Calu3 (cell line): ENCODE measurements at regions of chrX and their contacts with region 1.

Region 1: GRCh38 chrX:136529763-136530162 is 2.3 kb upstream of the VGLL1 start:
- DNase-seq: peak; percentile 9
- H3K4me3 Mint-ChIP-seq: no peak overlapping the region
- H3K27ac Mint-ChIP-seq: no peak overlapping the region
- H3K4me1 Mint-ChIP-seq: peaks cover 94% of the 10 kb centered on the region
- H3K27me3 Mint-ChIP-seq: no peaks in the 10 kb centered on the region
- CTCF ChIP-seq: no peak

Region 2: GRCh38 chrX:136147315-136147901 is 382.4 kb before region 1 on chrX and contains the start of gene FHL1:
- CTCF ChIA-PET with region 1: no interaction called
- intact Hi-C with region 1: no loop called
- DNase-seq: no peak
- H3K4me3 Mint-ChIP-seq: peak within 1 kb of the TSS; percentile 60
- H3K27ac Mint-ChIP-seq: no peak within 1 kb of the TSS
- H3K4me1 Mint-ChIP-seq: no peaks in the 10 kb centered on the region
- H3K27me3 Mint-ChIP-seq: peaks cover 39% of the 10 kb centered on the region
- CTCF ChIP-seq: no peak
- total RNA-seq, gene FHL1: 0.54 and 0.73 TPM in 2 replicates

Region 3: DNA sequence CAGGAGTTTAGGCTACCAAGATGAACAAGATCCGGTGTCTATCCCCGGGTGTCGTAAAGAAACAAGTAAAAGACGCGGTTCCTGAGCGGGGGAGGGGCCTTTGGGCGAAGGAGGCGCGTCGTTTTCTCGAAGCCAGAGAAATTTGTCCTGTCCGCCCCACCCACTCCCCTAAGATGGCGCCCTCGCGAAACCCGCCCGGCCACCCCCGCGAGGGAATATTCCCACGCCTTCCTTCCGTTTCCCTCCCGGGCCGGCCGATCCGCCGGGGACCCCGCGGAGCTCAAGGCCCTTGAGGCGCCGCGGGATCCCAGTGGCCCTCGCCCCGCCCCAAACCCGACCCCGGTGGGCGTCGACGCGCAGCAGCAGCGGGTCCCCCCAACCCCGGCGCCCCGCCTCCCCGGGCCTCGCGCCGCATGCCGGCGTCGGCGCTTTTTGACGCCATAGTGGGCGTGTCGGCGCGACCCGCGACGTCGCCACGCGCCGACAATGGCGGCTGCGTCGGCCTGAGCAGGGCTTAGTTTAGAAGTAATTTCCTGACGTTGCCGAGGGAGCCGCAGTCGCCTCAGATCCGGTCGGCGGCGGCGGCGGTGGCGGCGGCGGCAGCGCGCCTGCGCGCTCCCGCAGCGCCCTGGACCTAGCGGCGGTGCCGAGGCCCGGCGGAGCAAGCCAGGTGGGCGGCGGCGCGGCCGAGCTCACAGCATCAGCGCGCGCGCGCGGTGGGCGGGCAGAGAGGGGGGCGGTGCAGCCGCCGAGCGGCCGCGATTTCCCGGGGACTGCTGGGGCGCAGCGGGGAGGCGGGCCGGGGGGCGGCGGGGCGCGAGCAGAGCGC is 32.8 kb before region 1 on chrX and contains the start of gene HTATSF1:
- CTCF ChIA-PET with region 1: interaction called, 6 read pairs
- intact Hi-C with region 1: loop called (anchors 5 kb)
- DNase-seq: peak; percentile 86
- H3K4me3 Mint-ChIP-seq: peak within 1 kb of the TSS; percentile 73
- H3K27ac Mint-ChIP-seq: peak within 1 kb of the TSS; percentile 82
- H3K4me1 Mint-ChIP-seq: peaks cover 5% of the 10 kb centered on the region
- H3K27me3 Mint-ChIP-seq: peaks cover 6% of the 10 kb centered on the region
- CTCF ChIP-seq: no peak
- total RNA-seq, gene HTATSF1: 46.0 and 48.7 TPM in 2 replicates